ENCODE measurements at regions of chr9 and their contacts with region 1.

Region 1: DNA sequence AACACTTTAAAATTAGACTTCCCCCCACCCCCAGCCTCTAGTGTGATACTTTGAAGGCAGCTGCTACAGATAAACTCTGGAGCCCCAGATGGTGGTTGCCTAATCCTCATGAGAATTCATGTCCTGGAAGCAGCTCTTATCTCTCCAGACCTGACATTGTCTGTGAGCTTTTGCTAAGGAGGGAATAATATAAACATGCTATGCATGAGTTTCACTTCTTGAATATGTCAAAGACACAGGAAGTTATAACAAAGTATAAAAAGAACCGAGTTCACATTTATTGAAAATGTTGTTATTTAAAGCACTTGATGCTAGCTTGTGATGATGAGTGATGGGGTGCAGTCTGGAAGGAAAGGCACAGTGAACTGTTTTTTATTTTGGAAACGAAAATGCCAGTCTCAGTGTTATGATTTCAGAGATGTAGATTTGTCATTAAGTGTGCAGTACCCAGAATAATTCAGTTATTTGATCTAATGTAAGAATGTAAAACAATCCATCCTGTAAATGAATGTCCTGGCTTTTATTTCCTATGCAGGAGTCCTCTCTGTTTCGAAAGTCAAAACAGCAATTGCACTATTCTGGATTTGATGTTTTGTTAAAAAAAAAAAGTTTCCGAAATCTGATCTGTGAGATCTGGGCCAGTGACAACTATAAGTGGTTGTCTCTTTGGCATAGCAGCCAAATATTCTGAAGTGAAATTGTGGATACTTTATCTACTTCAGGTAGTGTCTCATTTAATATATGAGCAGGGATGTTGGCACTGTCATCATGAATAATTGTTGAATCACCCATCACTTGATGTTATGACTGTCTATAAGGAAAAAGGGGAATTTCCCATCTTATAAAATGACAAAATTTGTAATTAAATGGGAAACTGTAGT is 77.0 kb downstream of the ZCCHC7 start:
- DNase-seq: peak; percentile 99
- H3K4me3 ChIP-seq: peak overlapping the region; percentile 60
- H3K27ac ChIP-seq: peak overlapping the region; percentile 99
- H3K4me1 ChIP-seq: peaks cover 97% of the 10 kb centered on the region
- CTCF ChIP-seq: no peak

Region 2: GRCh38 chr9:36995927-36996705 is 201.3 kb before region 1 on chr9:
- CTCF ChIA-PET with region 1: no interaction called
- POLR2A ChIA-PET with region 1: interaction called, 3 read pairs
- intact Hi-C with region 1: loop called (anchors 10 kb)
- DNase-seq: peak; percentile 57
- H3K4me3 ChIP-seq: peak overlapping the region; percentile 17
- H3K27ac ChIP-seq: peak overlapping the region; percentile 64
- H3K4me1 ChIP-seq: peaks cover 87% of the 10 kb centered on the region
- CTCF ChIP-seq: peak; percentile 84

Region 3: GRCh38 chr9:37119907-37120842 is 77.2 kb before region 1 on chr9 and contains the start of gene ZCCHC7:
- CTCF ChIA-PET with region 1: no interaction called
- POLR2A ChIA-PET with region 1: interaction called, 15 read pairs
- intact Hi-C with region 1: loop called (anchors 2 kb)
- DNase-seq: peak; percentile 96
- H3K4me3 ChIP-seq: peak within 1 kb of the TSS; percentile 96
- H3K27ac ChIP-seq: peak within 1 kb of the TSS; percentile 65
- H3K4me1 ChIP-seq: peaks cover 43% of the 10 kb centered on the region
- CTCF ChIP-seq: no peak
- total RNA-seq, gene ZCCHC7: 108 and 110 TPM in 2 replicates

Region 4: GRCh38 chr9:37209431-37210386 is 12.3 kb after region 1 on chr9:
- CTCF ChIA-PET with region 1: interaction called, 4 read pairs
- POLR2A ChIA-PET with region 1: interaction called, 67 read pairs
- intact Hi-C with region 1: no loop called
- DNase-seq: peak; percentile 51
- H3K4me3 ChIP-seq: peak overlapping the region; percentile 39
- H3K27ac ChIP-seq: peak overlapping the region; percentile 86
- H3K4me1 ChIP-seq: peaks cover 99% of the 10 kb centered on the region
- CTCF ChIP-seq: peak; percentile 69

Region 5: DNA sequence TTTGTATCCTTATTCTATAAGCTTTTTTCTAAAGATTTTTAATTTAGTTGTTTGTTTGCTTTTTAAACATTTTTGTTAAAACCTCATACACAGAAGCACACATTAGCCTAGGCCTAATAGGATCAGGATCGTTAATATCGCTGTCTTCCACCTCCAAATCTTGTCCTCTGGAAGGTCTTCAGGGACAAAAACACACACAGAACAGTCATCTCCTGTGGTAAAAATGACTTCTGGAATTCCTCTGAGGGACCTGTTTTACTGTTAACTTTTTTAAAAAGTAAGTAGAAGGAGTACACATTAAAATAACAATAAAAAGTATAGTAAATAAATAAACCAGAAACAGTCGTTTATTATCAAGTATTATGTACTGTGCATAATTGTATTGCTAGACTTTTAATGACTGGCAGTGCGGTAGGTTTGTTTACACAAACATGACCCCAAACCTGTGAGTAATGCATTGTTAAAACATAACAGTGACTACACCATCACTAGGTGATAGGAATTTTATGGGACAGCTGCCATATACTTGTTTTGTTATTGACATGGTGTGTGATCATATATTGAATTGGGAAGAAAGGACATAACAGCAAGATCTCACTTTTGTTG is 32.6 kb after region 1 on chr9:
- CTCF ChIA-PET with region 1: no interaction called
- POLR2A ChIA-PET with region 1: no interaction called
- intact Hi-C with region 1: no loop called
- DNase-seq: no peak
- H3K4me3 ChIP-seq: no peak overlapping the region
- H3K27ac ChIP-seq: no peak overlapping the region
- H3K4me1 ChIP-seq: no peaks in the 10 kb centered on the region
- CTCF ChIP-seq: no peak

Region 6: GRCh38 chr9:37243588-37244345 is 46.4 kb after region 1 on chr9:
- CTCF ChIA-PET with region 1: no interaction called
- POLR2A ChIA-PET with region 1: no interaction called
- intact Hi-C with region 1: no loop called
- DNase-seq: no peak
- H3K4me3 ChIP-seq: no peak overlapping the region
- H3K27ac ChIP-seq: no peak overlapping the region
- H3K4me1 ChIP-seq: peaks cover 28% of the 10 kb centered on the region
- CTCF ChIP-seq: no peak

Region 7: DNA sequence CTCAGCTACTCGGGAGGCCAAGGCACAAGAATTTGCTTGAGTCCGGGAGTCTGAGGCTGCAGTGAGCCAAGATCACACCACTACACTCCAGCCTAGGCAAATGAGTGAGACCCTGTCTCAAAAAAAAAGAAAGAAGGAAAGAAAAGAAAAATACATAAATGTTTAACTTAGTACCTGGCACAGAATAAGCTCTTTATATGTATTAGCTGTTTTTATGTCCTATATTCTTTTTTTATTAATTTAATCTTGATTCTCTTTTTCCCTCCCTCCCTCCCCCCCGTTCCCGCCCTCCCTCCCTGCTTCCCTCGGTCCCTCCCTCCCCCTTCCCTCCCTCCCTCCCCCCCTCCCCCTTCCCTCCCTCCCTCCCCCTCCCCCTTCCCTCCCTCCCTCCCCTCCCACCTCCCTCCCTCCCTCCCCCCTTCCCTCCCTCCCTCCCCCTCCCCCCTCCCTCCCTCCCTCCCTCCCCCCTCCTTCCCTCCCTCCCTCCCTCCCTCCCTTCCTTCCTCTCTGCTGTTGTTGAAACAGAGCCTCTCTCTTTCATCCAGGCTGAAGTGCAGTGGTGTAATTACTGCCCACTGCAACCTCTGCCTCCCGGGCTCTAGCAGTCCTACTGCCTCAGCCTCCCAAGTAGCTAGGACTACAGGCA is 89.3 kb after region 1 on chr9:
- CTCF ChIA-PET with region 1: no interaction called
- POLR2A ChIA-PET with region 1: interaction called, 11 read pairs
- intact Hi-C with region 1: no loop called
- DNase-seq: peak; percentile 44
- H3K4me3 ChIP-seq: peak overlapping the region; percentile 68
- H3K27ac ChIP-seq: peak overlapping the region; percentile 99
- H3K4me1 ChIP-seq: peaks cover 94% of the 10 kb centered on the region
- CTCF ChIP-seq: no peak

Region 8: DNA sequence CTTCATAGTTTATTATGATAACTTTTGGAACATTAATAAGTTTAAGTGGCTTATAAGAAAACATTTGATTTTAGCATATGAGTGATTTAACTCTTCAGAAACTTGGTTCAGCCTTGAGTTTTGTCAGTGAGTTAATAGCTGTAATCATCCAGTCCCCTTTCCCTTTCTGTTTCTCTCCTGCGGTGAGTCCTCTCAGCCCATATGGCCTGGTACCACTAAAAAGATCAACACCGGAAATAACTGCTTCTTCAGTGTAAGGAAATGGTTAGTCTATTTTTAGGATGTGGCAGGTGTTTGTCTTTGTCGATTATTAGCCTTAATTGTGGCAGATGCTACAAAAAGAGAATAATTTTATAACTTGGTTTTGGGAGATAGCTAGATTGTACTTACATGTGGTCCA is 104.9 kb after region 1 on chr9:
- CTCF ChIA-PET with region 1: interaction called, 4 read pairs
- POLR2A ChIA-PET with region 1: interaction called, 269 read pairs
- intact Hi-C with region 1: loop called (anchors 1 kb)
- DNase-seq: peak; percentile 98
- H3K4me3 ChIP-seq: peak overlapping the region; percentile 41
- H3K27ac ChIP-seq: peak overlapping the region; percentile 99
- H3K4me1 ChIP-seq: peaks cover 84% of the 10 kb centered on the region
- CTCF ChIP-seq: no peak

Region 9: GRCh38 chr9:37415011-37415719 is 217.8 kb after region 1 on chr9:
- CTCF ChIA-PET with region 1: no interaction called
- POLR2A ChIA-PET with region 1: interaction called, 3 read pairs
- intact Hi-C with region 1: loop called (anchors 2 kb)
- DNase-seq: peak; percentile 92
- H3K4me3 ChIP-seq: peak overlapping the region; percentile 55
- H3K27ac ChIP-seq: peak overlapping the region; percentile 97
- H3K4me1 ChIP-seq: peaks cover 94% of the 10 kb centered on the region
- CTCF ChIP-seq: peak; percentile 92

Region 10: DNA sequence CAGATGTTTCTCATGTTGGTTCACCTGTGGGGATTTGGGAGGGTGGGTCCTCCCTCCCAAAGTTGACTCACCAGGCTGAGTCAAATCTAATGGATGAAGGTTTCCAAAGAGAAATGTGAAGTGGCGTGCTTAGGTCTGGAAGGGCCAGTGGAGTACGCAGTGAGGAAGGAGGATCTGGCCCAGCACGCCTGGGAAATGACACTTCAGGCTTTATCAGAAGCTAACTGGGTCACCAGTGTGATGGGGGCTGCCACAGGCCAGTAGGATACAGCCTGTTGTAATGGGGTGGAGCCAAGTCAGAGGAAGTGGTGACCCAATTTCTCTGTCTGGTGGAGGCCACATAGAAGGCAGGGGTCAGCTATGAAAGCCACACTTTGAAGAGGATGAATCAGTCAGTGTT is 306.3 kb after region 1 on chr9:
- CTCF ChIA-PET with region 1: no interaction called
- POLR2A ChIA-PET with region 1: no interaction called
- intact Hi-C with region 1: no loop called
- DNase-seq: no peak
- H3K4me3 ChIP-seq: no peak overlapping the region
- H3K27ac ChIP-seq: no peak overlapping the region
- H3K4me1 ChIP-seq: no peaks in the 10 kb centered on the region
- CTCF ChIP-seq: no peak

Measured in OCI-LY7 (cell line).